Motor neuron (in vitro differentiated cells): ENCODE measurements at regions of chr9 and their contacts with region 1.

Region 1: DNA sequence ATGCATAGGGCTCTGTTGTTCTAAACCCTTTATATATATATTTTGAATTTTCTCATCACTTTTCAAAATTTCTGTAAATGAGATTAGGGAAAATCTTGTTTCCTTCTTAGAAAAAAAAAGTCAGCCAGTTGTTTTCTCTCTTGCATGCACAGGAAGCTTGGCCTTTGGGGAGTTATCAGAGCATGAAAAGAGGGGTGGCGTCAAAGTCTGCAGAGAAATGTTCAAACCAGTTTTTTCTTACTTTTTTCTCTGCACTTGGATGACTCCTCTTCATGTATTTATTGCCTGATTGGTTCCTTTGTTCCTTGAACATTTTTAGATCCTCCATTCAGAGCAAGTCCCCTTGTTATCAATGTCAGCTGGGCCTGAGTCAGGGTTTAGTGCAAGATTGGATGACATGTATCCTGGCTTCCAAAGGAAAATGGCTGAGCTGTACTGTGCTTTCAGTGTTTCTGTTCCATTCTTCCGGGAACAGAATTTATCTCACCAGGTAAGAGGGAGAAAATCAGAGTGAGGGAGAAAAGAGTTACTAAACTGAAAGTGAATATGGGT is 392.6 kb upstream of the BRINP1 start:
- ATAC-seq: peak in 4 of 8 experiments; percentile 78 to 90 (median 85)
- H3K4me3 ChIP-seq: peak overlapping the region in 1 of 5 donors; percentile 11
- H3K27ac ChIP-seq: peak overlapping the region in 1 of 2 donors; percentile 66
- H3K4me1 ChIP-seq: peaks cover 0 to 4% of the 10 kb centered on the region in 2 donors

Region 2: DNA sequence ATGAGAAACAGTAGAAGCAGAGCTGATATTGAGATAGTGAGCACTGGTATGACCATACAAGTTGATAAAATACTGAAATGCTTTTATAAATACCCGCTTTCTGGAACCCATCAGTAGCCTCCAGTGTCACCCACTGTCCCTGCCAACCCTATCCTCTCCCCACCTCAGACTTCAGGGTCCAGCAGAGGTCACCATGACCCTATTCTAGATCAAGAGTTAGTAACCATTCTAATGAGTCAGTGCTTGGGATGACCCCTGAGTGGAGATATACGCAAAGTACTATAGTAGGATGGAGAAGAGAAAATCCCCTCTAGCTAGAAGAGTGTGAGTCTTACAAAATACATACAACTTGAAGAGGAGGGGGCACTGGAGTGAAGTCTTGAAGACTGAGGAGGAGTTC is 94.7 kb before region 1 on chr9:
- in situ Hi-C with region 1: loop called in 1 of 9 experiments (anchors 25 kb)
- ATAC-seq: no peak
- H3K4me3 ChIP-seq: no peak overlapping the region
- H3K27ac ChIP-seq: no peak overlapping the region
- H3K4me1 ChIP-seq: no peaks in the 10 kb centered on the region

Region 3: DNA sequence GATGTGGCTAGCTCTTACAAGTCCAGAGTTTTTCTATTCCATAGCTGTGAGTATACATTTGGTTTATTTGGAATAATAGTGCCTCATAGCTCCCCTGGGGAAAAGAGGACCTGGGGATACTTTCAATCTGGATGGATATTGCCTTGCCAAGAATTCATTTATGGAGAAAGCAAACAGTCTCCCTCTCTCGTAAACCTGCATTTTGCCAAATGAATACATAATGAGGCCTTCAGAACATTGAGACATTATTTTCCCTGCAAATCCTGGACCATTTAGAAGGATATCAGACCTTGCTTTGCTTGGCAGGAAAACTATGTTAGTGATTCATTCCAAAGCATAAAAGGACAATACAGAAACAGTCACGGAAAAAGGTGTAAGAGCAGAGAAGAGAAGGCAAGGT is 177.1 kb after region 1 on chr9:
- in situ Hi-C with region 1: no loop called
- ATAC-seq: no peak
- H3K4me3 ChIP-seq: no peak overlapping the region
- H3K27ac ChIP-seq: no peak overlapping the region
- H3K4me1 ChIP-seq: no peaks in the 10 kb centered on the region